ENCODE measurements at regions of chr1 and their contacts with region 1.

Region 1: DNA sequence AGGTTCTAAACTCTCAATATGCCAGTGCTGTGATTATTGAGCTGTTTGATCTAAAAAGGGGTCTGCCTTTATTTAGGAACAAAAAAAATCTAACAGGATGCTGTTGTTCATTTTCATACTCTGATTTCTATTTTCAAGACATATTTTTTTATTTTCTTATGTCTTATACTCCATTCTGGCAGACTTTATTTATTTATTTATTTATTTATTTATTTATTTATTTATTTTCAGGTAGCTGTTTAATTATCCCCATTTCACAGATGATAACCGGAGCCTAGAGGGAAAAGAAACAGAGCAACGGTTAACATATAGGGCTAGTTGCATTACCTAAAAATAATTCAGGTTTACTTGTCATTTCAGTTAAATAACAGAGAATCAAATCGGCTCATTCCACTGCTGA is 174.4 kb downstream of the CENPF start:
- DNase-seq: no peak
- ATAC-seq: no peak
- H3K4me3 ChIP-seq: no peak overlapping the region
- H3K27ac ChIP-seq: no peak overlapping the region
- H3K4me1 ChIP-seq: no peaks in the 10 kb centered on the region
- H3K27me3 ChIP-seq: no peaks in the 10 kb centered on the region
- CTCF ChIP-seq: no peak

Region 2: GRCh38 chr1:214808845-214809460 is 31.6 kb after region 1 on chr1:
- intact Hi-C with region 1: loop called in 1 of 10 experiments (anchors 1 kb)
- DNase-seq: no peak
- ATAC-seq: no peak
- H3K4me3 ChIP-seq: no peak overlapping the region
- H3K27ac ChIP-seq: no peak overlapping the region
- H3K4me1 ChIP-seq: no peaks in the 10 kb centered on the region
- H3K27me3 ChIP-seq: no peaks in the 10 kb centered on the region
- CTCF ChIP-seq: peak in 4 of 9 donors; percentile 10 to 31 (median 16)

Measured in heart right ventricle (tissue), 16 donors.